ENCODE measurements at regions of chr1 and their contacts with region 1.

Region 1: GRCh38 chr1:116934586-116935207 is 25.0 kb downstream of the PTGFRN start:
- DNase-seq: peak; percentile 26
- CTCF ChIP-seq: peak; percentile 27

Region 2: GRCh38 chr1:116842654-116843053 is 92.0 kb before region 1 on chr1:
- CTCF ChIA-PET with region 1: no interaction called
- POLR2A ChIA-PET with region 1: no interaction called
- DNase-seq: no peak
- CTCF ChIP-seq: no peak

Region 3: DNA sequence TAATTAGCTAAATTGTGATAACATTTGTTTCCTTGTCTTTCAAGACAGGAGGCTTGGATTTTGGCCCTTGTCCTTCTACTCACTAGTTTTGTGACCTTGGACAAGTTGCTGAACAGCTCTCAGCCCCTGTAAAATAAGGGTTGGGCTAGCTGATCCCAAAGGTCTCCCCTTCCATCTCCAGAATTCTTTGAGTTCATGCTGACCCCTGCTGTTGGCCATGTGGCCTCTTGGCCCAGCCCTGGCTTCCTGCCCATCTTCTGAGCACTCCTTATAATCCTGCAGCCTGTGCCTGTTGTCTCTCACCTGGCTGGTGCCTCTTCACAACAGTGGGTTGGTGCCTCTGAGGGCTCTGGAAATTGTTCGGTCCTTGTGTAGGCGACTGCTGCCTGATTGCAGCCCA is 14.9 kb before region 1 on chr1:
- CTCF ChIA-PET with region 1: interaction called, 14 read pairs
- POLR2A ChIA-PET with region 1: no interaction called
- DNase-seq: no peak
- CTCF ChIP-seq: no peak

Measured in GM10248 (cell line).